ENCODE measurements at regions of chr1 and their contacts with region 1.

Region 1: DNA sequence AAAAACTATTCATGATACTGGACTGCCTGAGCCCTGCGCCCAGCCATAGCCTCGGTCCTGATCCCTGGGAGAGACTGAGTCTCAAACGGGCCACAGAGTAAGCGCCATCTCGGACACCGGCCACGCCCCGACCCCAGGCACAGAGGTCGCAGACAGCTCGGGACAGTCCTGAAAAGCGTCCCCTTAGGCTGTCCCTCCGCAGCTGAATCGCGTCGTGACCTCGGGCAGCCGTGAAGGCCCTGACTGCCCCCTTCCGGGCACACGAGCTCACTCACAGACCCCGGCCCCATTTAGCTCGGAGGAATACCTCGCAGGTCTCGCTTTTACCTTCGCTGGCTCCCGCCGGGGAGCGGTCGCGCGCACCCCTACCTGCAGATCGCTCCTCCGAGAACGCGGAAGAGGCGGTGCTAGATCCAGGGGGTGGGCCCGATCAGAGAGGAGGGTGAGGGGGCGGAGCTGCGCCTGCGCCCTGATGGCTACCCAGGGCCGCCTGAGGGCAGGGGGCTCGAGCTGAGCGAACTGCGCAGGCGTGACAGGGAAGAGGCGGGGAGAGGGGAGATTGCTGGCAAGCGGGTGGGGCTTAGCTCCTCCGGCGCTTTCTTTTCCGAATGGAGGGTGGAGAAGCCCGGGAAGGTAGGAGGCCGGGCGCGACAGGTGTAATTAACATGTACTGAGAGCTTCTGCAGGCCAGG is at the start of gene MKNK1:
- DNase-seq: peak; percentile 98
- H3K4me3 Mint-ChIP-seq: peak within 1 kb of the TSS; percentile 86
- H3K27ac Mint-ChIP-seq: peak within 1 kb of the TSS; percentile 81
- H3K4me1 Mint-ChIP-seq: peaks cover 70% of the 10 kb centered on the region
- H3K27me3 Mint-ChIP-seq: no peaks in the 10 kb centered on the region
- total RNA-seq, gene MKNK1: 81.5 to 83.7 TPM

Region 2: GRCh38 chr1:46581681-46582455 is 22.1 kb before region 1 on chr1:
- CTCF ChIA-PET with region 1: interaction called, 54 read pairs
- POLR2A ChIA-PET with region 1: interaction called, 202 read pairs
- DNase-seq: peak; percentile 54
- H3K4me3 Mint-ChIP-seq: peak overlapping the region; percentile 62
- H3K27ac Mint-ChIP-seq: peak overlapping the region; percentile 99
- H3K4me1 Mint-ChIP-seq: peaks cover 56% of the 10 kb centered on the region
- H3K27me3 Mint-ChIP-seq: no peaks in the 10 kb centered on the region

Region 3: DNA sequence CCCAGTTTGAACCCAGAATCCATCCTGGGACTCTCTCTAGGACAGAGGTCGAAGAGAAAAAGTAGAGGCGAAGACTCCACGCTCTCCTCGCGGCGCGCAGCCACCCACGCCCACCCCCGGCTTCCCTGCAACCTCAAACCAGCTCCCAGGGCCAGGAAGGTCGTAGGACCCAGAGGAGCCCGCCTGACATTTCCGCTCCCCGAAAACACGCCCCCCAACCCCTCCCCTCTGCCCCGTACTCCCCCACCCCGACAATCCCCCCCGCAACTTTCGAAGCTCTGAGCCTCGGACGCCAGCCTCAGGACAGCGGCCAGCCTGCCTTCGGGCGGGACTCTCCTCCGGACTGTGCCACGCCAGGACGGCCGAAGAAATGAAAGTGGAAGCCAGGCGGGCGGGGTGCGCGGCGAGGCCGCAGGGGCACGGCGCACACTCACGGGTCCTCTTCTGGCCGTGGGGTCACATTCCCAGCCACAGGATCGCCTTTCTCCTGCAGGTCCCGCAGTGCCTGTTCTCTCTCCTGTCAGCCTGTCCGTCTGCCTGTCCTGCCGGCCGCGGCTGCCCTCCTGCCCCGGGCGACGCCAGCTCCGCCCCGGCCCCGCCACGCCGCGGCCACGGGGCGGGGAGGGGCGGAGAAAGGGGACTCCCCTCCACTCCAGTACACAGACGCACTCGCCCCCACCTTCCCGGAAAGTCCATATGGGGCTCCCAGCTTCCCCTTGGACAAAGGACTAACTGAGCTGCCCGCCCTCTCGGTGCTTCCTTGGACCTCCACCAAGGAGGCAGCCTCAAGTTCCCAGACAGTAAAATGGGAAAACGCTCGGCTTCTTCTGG is 12.5 kb after region 1 on chr1 and contains the start of gene MOB3C:
- CTCF ChIA-PET with region 1: interaction called, 32 read pairs
- POLR2A ChIA-PET with region 1: interaction called, 66 read pairs
- DNase-seq: peak; percentile 71
- H3K4me3 Mint-ChIP-seq: peak within 1 kb of the TSS; percentile 88
- H3K27ac Mint-ChIP-seq: peak within 1 kb of the TSS; percentile 75
- H3K4me1 Mint-ChIP-seq: peaks cover 70% of the 10 kb centered on the region
- H3K27me3 Mint-ChIP-seq: no peaks in the 10 kb centered on the region
- total RNA-seq, gene MOB3C: 23.2 to 23.8 TPM

Region 4: GRCh38 chr1:46724991-46725735 is 121.2 kb after region 1 on chr1:
- CTCF ChIA-PET with region 1: interaction called, 11 read pairs
- POLR2A ChIA-PET with region 1: interaction called, 12 read pairs
- DNase-seq: peak; percentile 74
- H3K4me3 Mint-ChIP-seq: no peak overlapping the region
- H3K27ac Mint-ChIP-seq: no peak overlapping the region
- H3K4me1 Mint-ChIP-seq: peaks cover 7% of the 10 kb centered on the region
- H3K27me3 Mint-ChIP-seq: peaks cover 33% of the 10 kb centered on the region

Region 5: GRCh38 chr1:46757241-46757959 is 153.4 kb after region 1 on chr1:
- CTCF ChIA-PET with region 1: no interaction called
- POLR2A ChIA-PET with region 1: no interaction called
- DNase-seq: no peak
- H3K4me3 Mint-ChIP-seq: no peak overlapping the region
- H3K27ac Mint-ChIP-seq: no peak overlapping the region
- H3K4me1 Mint-ChIP-seq: no peaks in the 10 kb centered on the region
- H3K27me3 Mint-ChIP-seq: peaks cover 37% of the 10 kb centered on the region